Activated naive CD4-positive, alpha-beta T cell treated with anti-CD3 and anti-CD28 coated beads for 36 hours (primary cell): ENCODE measurements at regions of chr17 and their contacts with region 1.

Region 1: GRCh38 chr17:74566132-74566753 is 1.1 kb downstream of the CD300H start:
- DNase-seq: peak; percentile 61
- H3K4me3 Mint-ChIP-seq: no peak overlapping the region
- H3K27ac Mint-ChIP-seq: no peak overlapping the region
- H3K4me1 Mint-ChIP-seq: peaks cover 18% of the 10 kb centered on the region
- H3K27me3 Mint-ChIP-seq: peaks cover 23% of the 10 kb centered on the region

Region 2: GRCh38 chr17:74528491-74529199 is 37.6 kb before region 1 on chr17:
- CTCF ChIA-PET with region 1: no interaction called
- intact Hi-C with region 1: no loop called
- DNase-seq: no peak
- H3K4me3 Mint-ChIP-seq: no peak overlapping the region
- H3K27ac Mint-ChIP-seq: no peak overlapping the region
- H3K4me1 Mint-ChIP-seq: peaks cover 2% of the 10 kb centered on the region
- H3K27me3 Mint-ChIP-seq: peaks cover 26% of the 10 kb centered on the region

Region 3: DNA sequence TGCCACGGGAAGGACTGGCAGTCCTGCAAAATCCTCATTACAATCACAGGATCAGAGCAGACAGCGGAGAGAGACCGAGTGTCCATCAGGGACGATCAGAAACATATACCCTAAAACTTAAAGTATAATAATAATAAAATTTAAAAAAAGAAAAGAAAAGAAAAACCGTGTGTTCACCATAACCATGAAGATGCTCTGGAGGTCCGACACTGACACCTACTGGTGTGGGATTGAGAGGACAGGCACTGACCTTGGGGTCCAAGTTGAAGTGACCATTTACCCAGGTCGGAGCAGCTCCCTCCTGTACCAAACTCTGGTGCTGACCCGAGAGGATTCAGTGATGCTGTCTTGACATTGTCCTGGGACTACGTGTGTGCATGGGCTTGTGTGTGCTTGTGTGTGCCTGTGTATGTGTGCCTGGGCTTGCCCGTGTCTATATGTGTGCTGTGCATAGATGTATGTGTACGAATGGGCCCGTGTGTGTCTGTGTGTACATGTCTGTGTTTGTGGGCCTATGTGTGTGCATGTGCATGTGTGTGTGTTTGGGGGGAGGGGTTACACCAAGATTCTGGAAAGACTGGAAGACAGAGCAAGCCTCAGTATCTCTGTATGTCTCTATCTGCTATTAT is 35.8 kb after region 1 on chr17:
- CTCF ChIA-PET with region 1: interaction called, 5 read pairs
- intact Hi-C with region 1: loop called (anchors 2 kb)
- DNase-seq: peak; percentile 74
- H3K4me3 Mint-ChIP-seq: no peak overlapping the region
- H3K27ac Mint-ChIP-seq: no peak overlapping the region
- H3K4me1 Mint-ChIP-seq: peaks cover 20% of the 10 kb centered on the region
- H3K27me3 Mint-ChIP-seq: peaks cover 4% of the 10 kb centered on the region

Region 4: DNA sequence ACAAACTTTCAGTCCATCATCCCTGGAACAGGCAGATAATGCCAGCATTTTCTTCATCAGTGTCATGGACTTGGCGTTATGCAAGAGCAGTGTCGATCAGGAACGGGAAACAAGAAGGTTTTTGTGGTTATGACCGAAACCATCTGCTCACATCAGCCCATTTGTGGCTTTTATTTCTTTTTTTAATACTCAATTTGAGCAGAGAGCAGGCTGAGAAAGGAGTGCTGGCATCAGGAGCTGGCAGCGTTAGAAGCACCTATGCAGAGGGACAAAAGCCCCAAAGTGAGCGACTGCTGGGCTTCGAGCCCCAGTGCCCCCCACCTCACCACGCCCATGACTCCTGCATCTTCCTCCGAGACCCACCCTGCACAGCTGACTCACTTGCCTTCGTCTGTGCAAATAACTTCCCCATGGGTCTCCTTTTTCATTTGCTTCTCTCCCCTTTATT is 73.5 kb after region 1 on chr17:
- CTCF ChIA-PET with region 1: no interaction called
- intact Hi-C with region 1: loop called (anchors 5 kb)
- DNase-seq: peak; percentile 35
- H3K4me3 Mint-ChIP-seq: no peak overlapping the region
- H3K27ac Mint-ChIP-seq: no peak overlapping the region
- H3K4me1 Mint-ChIP-seq: peaks cover 12% of the 10 kb centered on the region
- H3K27me3 Mint-ChIP-seq: peaks cover 15% of the 10 kb centered on the region